Mammary epithelial cell (primary cell): ENCODE measurements at regions of chr7 and their contacts with region 1.

Region 1: DNA sequence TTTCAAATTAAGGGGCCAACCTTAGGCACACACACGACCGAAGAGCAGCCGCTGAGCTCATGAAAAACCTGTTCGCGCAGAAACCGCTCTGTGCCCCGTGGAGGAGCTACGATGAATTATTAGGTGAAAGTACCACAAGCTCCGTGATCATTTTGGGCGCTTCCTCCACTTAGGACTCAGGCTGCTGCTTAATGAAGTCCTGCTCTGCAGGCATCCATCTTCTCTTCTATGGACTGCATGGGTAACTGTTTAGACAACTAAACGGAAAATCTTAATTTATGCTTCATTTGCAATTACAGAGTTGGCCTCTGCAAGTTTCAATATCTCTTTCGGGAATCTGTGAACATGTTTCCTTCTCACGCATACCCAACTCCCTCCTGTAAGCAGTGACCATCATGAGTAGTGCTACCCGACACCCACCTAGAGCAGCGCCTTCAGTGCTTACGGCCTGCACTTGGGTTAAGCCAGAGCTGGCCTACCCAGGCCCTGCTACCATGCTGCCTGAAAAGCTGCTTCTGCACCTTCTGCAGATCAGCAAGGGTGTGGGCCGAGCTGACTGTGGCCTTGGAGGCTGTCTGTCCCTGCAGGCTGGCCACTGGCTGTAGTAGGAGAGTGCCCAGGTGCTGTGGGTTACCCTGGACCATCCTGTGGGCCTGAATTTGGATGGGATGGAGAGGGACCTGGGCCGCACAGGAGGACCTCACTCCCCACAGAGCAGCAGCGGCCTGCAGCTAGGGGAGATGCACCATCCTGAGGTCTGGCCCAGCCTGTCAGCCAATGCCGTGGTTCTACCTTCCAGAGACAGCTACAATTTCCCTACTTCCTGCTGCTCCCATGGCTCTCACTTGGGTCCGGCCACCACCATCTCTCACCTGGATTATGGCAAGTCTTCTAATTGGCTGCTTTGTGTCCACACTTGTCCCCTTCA is 36.0 kb downstream of the GNA12 start:
- DNase-seq: no peak
- H3K4me3 ChIP-seq: no peak overlapping the region
- H3K27ac ChIP-seq: no peak overlapping the region
- H3K4me1 ChIP-seq: peaks cover 7% of the 10 kb centered on the region
- H3K27me3 ChIP-seq: no peaks in the 10 kb centered on the region
- CTCF ChIP-seq: no peak

Region 2: DNA sequence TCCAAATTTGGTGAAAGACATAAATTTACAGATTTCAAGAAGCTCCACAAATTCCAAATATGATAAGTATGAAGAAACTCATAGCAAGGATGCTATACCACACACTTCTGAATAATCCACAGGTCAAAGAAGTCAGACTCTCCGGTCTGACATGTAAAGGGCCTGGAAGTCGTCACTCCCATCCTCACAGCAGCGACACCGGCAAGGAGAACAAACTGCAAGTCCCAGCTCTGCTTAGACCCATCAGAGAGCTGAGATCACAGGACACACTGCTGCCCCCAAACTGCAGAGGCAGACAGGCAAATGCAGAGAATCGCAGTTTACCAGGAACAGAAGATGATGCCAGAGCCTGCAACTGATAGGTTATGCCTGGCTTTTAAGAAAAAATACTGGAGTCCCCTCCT is 58.1 kb before region 1 on chr7:
- CTCF ChIA-PET with region 1: no interaction called
- dilution Hi-C with region 1: no loop called
- in situ Hi-C with region 1: no loop called
- intact Hi-C with region 1: no loop called
- DNase-seq: no peak
- H3K4me3 ChIP-seq: no peak overlapping the region
- H3K27ac ChIP-seq: no peak overlapping the region
- H3K4me1 ChIP-seq: no peaks in the 10 kb centered on the region
- H3K27me3 ChIP-seq: no peaks in the 10 kb centered on the region
- CTCF ChIP-seq: no peak

Region 3: DNA sequence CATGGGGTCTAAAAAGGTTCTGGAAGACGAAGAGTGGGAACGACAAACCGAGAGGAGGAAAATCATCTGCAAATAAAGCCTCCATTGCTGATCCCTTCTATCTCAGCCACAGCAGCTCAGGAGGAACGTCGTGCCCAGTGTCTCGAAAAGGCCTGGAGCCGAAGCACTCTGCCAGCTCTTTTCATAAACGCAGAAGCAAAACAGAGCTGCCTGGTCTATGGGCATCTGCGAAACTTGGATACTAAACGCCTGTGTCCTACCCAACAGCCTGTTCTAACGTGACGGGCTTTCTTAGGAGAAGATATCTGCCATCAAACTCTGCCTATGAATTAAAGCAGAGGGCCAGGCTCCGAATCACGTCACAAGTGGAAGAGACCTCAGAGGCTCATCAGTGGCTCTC is 32.7 kb before region 1 on chr7:
- CTCF ChIA-PET with region 1: no interaction called
- dilution Hi-C with region 1: no loop called
- in situ Hi-C with region 1: no loop called
- intact Hi-C with region 1: loop called (anchors 2 kb)
- DNase-seq: no peak
- H3K4me3 ChIP-seq: no peak overlapping the region
- H3K27ac ChIP-seq: no peak overlapping the region
- H3K4me1 ChIP-seq: no peaks in the 10 kb centered on the region
- H3K27me3 ChIP-seq: no peaks in the 10 kb centered on the region
- CTCF ChIP-seq: no peak